Transverse colon (tissue), 4 donors: ENCODE measurements at regions of chr7 and their contacts with region 1.

Region 1: GRCh38 chr7:149497456-149498261 is at the start of gene ZNF746:
- DNase-seq: peak; percentile 85
- H3K4me3 ChIP-seq: peak within 1 kb of the TSS; percentile 76 to 96 (median 86)
- H3K27ac ChIP-seq: peak within 1 kb of the TSS; percentile 89 to 94 (median 91)
- H3K4me1 ChIP-seq: peaks cover 9 to 25% (median 11%) of the 10 kb centered on the region in 4 donors
- H3K27me3 ChIP-seq: no peaks in the 10 kb centered on the region
- CTCF ChIP-seq: peak in 3 of 5 experiments; percentile 37 to 63 (median 62)
- EP300 ChIP-seq: no peak
- POLR2A ChIP-seq: no peak
- total RNA-seq, gene ZNF746: 15.8 to 50.4 (median 33.1) TPM

Region 2: GRCh38 chr7:149310113-149310836 is 187.4 kb before region 1 on chr7:
- in situ Hi-C with region 1: loop called in 1 of 4 experiments (anchors 25 kb)
- intact Hi-C with region 1: no loop called
- DNase-seq: no peak
- H3K4me3 ChIP-seq: no peak overlapping the region
- H3K27ac ChIP-seq: no peak overlapping the region
- H3K4me1 ChIP-seq: no peaks in the 10 kb centered on the region
- H3K27me3 ChIP-seq: no peaks in the 10 kb centered on the region
- CTCF ChIP-seq: peak; percentile 33 to 62 (median 46)
- EP300 ChIP-seq: no peak
- POLR2A ChIP-seq: no peak

Region 3: DNA sequence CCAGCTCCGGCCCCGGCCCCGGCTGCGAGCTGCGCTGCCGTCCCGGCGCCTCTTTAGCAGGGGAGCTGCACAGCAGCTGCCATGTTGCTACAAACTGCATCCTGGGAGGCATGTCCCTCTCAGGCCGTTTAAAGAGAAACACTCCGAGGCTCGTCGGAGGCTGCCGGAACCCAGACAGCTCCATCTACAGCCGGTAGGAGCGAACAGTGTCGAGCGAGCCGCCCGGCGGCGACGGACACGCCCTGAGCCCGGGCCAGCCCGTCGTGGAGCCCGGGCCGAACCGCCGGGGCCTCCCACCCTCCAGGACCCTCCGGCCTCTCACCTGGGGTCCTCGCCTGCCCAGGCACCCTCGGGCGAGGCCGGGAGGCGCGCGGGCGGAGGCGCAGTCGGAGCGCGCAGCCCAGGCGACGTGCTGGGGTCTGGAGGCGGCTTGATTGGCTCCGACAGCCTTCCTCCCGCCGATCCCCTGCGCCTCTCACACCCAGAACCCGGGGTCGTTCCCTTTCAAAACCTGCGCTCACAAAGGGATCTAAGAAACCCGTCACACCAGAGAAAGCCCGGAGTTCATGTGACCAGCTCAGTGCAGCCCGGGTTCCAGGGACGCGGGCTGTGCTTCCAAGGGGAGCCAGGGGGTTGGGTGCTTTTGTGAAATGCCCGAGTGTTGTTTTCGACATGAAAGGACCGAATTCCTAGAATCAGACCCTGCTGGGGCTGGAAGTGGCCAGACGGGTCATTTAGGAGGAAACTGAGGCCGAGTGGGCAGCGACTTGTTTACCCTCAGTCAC is 37.0 kb before region 1 on chr7 and contains the start of gene ZNF777:
- in situ Hi-C with region 1: no loop called
- intact Hi-C with region 1: loop called (anchors 2 kb)
- DNase-seq: peak; percentile 86
- H3K4me3 ChIP-seq: peak within 1 kb of the TSS; percentile 67 to 99 (median 94)
- H3K27ac ChIP-seq: peak within 1 kb of the TSS; percentile 80 to 89 (median 88)
- H3K4me1 ChIP-seq: peaks cover 8 to 24% (median 15%) of the 10 kb centered on the region in 4 donors
- H3K27me3 ChIP-seq: peaks cover 5% of the 10 kb centered on the region
- CTCF ChIP-seq: peak; percentile 32 to 57 (median 48)
- EP300 ChIP-seq: no peak
- POLR2A ChIP-seq: peak; percentile 25
- total RNA-seq, gene ZNF777: 7.8 to 58.9 (median 14.2) TPM